Activated B cell treated with CpG ODN at 0.5 μM for 24 hours (primary cell): ENCODE measurements at regions of chr10 and their contacts with region 1.

Region 1: GRCh38 chr10:31759799-31760626 is 168.6 kb downstream of the ARHGAP12 start:
- DNase-seq: peak; percentile 85
- ATAC-seq: peak; percentile 94
- H3K4me3 Mint-ChIP-seq: peak overlapping the region; percentile 85
- H3K27ac Mint-ChIP-seq: peak overlapping the region; percentile 91
- H3K4me1 Mint-ChIP-seq: peaks cover 13% of the 10 kb centered on the region
- H3K27me3 Mint-ChIP-seq: no peaks in the 10 kb centered on the region
- CTCF ChIP-seq: no peak

Region 2: DNA sequence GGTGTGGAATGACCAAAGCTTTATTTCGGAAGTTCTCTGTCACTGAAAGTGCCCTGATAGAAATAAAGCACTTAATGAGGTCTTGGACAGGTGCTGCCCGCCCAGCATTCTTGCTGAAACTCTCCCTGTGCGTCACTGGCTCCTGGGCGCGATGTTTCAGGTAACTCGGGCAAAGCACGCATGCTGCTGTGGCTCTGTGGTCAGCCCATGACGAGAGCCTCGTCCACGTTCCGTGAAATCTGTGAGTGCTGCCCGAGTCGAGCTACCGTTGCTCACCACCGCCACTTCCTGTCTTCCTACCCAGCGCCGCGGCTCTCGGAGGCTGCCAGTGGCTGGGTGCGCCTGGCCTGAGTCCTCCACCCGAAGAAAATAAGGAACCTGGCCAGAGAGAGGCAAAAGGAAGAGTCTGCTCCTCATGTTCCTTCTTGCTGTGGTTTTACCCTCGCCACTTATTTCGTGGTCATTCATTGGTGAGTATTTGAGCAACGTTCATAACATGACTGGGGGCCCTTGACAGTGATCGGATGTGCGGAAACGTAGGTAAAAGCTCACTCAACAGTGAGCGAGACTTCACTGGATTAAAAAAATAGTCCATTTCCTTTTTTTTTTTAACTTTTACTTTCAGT is 1230.5 kb before region 1 on chr10:
- CTCF ChIA-PET with region 1: no interaction called
- POLR2A ChIA-PET with region 1: no interaction called
- intact Hi-C with region 1: loop called (anchors 5 kb)
- DNase-seq: peak; percentile 78
- ATAC-seq: peak; percentile 84
- H3K4me3 Mint-ChIP-seq: peak overlapping the region; percentile 86
- H3K27ac Mint-ChIP-seq: peak overlapping the region; percentile 98
- H3K4me1 Mint-ChIP-seq: peaks cover 76% of the 10 kb centered on the region
- H3K27me3 Mint-ChIP-seq: no peaks in the 10 kb centered on the region
- CTCF ChIP-seq: no peak

Region 3: DNA sequence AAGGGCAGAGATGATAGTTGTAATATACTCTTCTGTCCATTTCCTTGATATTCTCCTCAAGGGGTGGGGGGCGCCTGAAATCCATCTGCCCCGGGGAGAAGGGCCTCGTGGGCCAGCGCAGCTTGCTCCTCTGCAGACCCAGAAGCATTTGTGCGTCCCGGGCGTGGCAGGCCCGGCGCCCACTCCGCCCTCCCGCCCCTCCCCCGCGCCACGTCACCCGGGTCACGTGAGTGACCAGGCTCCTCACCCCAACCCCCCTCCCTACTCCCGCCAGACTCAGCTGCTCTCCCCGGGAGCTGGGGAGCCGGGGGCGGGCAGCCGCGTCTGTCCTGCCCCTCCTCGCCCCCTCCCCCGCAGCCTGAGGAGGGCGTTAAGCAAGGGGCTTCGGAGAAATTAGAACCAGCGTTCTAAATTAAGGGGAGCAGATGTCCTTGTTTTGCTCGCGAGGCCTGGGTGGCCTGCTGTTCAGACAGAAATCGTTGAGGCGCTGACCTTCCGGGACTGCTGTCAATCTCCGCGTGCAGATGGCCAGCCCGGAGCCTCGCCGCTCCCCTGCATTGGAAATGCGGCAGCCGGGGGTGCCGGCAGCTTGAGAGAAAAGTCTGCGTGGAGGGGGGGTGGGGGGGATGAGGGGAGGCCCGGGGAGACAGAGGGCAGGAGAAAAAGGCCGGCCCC is 626.2 kb before region 1 on chr10:
- CTCF ChIA-PET with region 1: no interaction called
- POLR2A ChIA-PET with region 1: no interaction called
- intact Hi-C with region 1: loop called (anchors 2 kb)
- DNase-seq: peak; percentile 53
- ATAC-seq: peak; percentile 84
- H3K4me3 Mint-ChIP-seq: peak overlapping the region; percentile 80
- H3K27ac Mint-ChIP-seq: peak overlapping the region; percentile 59
- H3K4me1 Mint-ChIP-seq: peaks cover 20% of the 10 kb centered on the region
- H3K27me3 Mint-ChIP-seq: no peaks in the 10 kb centered on the region
- CTCF ChIP-seq: no peak

Region 4: GRCh38 chr10:31603235-31604087 is 156.6 kb before region 1 on chr10:
- CTCF ChIA-PET with region 1: no interaction called
- POLR2A ChIA-PET with region 1: no interaction called
- intact Hi-C with region 1: loop called (anchors 1 kb)
- DNase-seq: peak; percentile 64
- ATAC-seq: peak; percentile 97
- H3K4me3 Mint-ChIP-seq: peak overlapping the region; percentile 83
- H3K27ac Mint-ChIP-seq: no peak overlapping the region
- H3K4me1 Mint-ChIP-seq: peaks cover 12% of the 10 kb centered on the region
- H3K27me3 Mint-ChIP-seq: peaks cover 6% of the 10 kb centered on the region
- CTCF ChIP-seq: no peak

Region 5: DNA sequence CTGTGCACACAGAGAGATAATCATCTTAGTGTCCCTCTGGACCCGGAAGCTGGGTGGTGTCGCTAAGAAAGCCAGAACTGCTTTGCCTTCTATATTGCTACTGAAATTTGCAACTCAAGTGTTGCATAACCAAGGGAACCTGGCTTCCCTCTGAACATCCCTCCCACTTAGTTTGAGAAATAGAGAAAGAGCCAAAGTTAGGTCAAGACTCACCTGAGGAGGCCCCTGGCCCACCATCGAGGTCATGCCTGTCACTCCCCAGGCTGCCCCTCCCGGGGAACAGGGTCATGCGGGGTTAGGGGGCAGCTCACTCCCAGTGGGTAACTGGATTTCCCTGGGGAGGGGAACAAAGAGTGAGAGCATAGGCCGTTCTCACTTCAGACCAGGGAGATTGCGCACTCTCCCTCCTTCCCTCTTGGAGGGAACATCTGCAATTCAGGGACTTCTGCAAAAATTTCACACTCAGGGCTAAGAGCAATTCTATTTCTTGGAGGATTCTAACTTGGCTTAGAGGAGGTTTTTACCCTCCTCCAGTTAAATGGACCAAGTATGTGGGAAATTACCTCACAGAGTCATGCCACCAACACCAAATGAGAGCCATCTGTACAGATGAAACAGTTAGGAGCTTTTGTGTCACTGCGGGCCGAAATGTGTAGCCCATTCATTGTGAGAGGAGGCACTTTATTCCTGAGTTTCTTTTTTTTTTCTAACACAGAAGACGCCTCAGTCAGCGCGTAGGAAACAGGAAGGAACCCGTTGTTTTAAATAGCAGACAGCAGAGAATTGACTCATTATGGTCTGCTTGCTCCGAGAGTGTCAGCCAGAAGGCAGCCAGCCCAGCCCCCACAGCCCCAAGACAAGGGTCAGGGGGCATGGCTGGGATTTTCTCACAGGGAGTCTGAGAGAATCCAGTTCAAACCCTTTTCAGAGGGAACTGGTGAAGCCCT is 52.6 kb before region 1 on chr10:
- CTCF ChIA-PET with region 1: no interaction called
- POLR2A ChIA-PET with region 1: interaction called, 3 read pairs
- intact Hi-C with region 1: loop called (anchors 1 kb)
- DNase-seq: no peak
- ATAC-seq: peak; percentile 91
- H3K4me3 Mint-ChIP-seq: peak overlapping the region; percentile 62
- H3K27ac Mint-ChIP-seq: peak overlapping the region; percentile 72
- H3K4me1 Mint-ChIP-seq: peaks cover 39% of the 10 kb centered on the region
- H3K27me3 Mint-ChIP-seq: no peaks in the 10 kb centered on the region
- CTCF ChIP-seq: no peak

Region 6: GRCh38 chr10:32055813-32056600 is 296.0 kb after region 1 on chr10 and contains the start of gene KIF5B:
- CTCF ChIA-PET with region 1: no interaction called
- POLR2A ChIA-PET with region 1: no interaction called
- intact Hi-C with region 1: loop called (anchors 5 kb)
- DNase-seq: peak; percentile 90
- ATAC-seq: peak; percentile 86
- H3K4me3 Mint-ChIP-seq: peak within 1 kb of the TSS; percentile 96
- H3K27ac Mint-ChIP-seq: peak within 1 kb of the TSS; percentile 90
- H3K4me1 Mint-ChIP-seq: peaks cover 56% of the 10 kb centered on the region
- H3K27me3 Mint-ChIP-seq: no peaks in the 10 kb centered on the region
- CTCF ChIP-seq: no peak
- total RNA-seq, gene KIF5B: 44.2 and 45.0 TPM in 2 replicates

Region 7: GRCh38 chr10:32958085-32959005 is 1198.3 kb after region 1 on chr10 and contains the start of gene ITGB1:
- CTCF ChIA-PET with region 1: no interaction called
- POLR2A ChIA-PET with region 1: no interaction called
- intact Hi-C with region 1: loop called (anchors 10 kb)
- DNase-seq: peak; percentile 85
- ATAC-seq: peak; percentile 83
- H3K4me3 Mint-ChIP-seq: peak within 1 kb of the TSS; percentile 86
- H3K27ac Mint-ChIP-seq: peak within 1 kb of the TSS; percentile 95
- H3K4me1 Mint-ChIP-seq: peaks cover 72% of the 10 kb centered on the region
- H3K27me3 Mint-ChIP-seq: no peaks in the 10 kb centered on the region
- CTCF ChIP-seq: no peak
- total RNA-seq, gene ITGB1: 80.3 and 87.4 TPM in 2 replicates